BJ (cell line): ENCODE measurements at regions of chr6 and their contacts with region 1.

Region 1: GRCh38 chr6:70221025-70221714 is 81.7 kb downstream of the COL9A1 start:
- DNase-seq: no peak
- H3K4me3 ChIP-seq: no peak overlapping the region
- H3K27me3 ChIP-seq: no peaks in the 10 kb centered on the region
- CTCF ChIP-seq: peak; percentile 63

Region 2: GRCh38 chr6:70099732-70100131 is 121.4 kb before region 1 on chr6:
- CTCF ChIA-PET with region 1: no interaction called
- POLR2A ChIA-PET with region 1: no interaction called
- DNase-seq: no peak
- H3K4me3 ChIP-seq: no peak overlapping the region
- H3K27me3 ChIP-seq: no peaks in the 10 kb centered on the region
- CTCF ChIP-seq: no peak

Region 3: GRCh38 chr6:70198785-70199184 is 22.4 kb before region 1 on chr6:
- CTCF ChIA-PET with region 1: interaction called, 11 read pairs
- POLR2A ChIA-PET with region 1: no interaction called
- DNase-seq: no peak
- H3K4me3 ChIP-seq: no peak overlapping the region
- H3K27me3 ChIP-seq: no peaks in the 10 kb centered on the region
- CTCF ChIP-seq: no peak

Region 4: DNA sequence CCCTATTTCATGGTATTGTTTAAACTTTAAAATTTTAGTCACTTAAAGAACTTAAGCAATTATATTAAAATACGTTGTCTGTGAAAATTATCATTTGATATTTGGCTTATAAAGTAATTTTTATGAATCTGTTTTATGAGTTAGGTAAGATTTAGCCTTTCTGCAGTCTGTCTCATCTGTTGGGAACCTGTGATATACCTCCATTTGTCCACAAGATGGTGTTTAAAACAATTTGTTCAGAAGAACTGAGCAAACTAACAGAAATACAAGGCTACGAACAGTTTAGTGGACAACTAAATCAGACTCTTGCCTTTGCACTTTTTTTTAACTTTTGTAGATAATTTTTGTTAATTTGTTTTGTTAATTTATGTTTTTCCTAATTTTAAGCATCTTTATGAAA is 10.7 kb before region 1 on chr6:
- CTCF ChIA-PET with region 1: interaction called, 18 read pairs
- POLR2A ChIA-PET with region 1: no interaction called
- DNase-seq: no peak
- H3K4me3 ChIP-seq: no peak overlapping the region
- H3K27me3 ChIP-seq: peaks cover 2% of the 10 kb centered on the region; the same call in 1 of the 2 replicates
- CTCF ChIP-seq: peak; percentile 26; the same call in 1 of the 2 replicates

Region 5: DNA sequence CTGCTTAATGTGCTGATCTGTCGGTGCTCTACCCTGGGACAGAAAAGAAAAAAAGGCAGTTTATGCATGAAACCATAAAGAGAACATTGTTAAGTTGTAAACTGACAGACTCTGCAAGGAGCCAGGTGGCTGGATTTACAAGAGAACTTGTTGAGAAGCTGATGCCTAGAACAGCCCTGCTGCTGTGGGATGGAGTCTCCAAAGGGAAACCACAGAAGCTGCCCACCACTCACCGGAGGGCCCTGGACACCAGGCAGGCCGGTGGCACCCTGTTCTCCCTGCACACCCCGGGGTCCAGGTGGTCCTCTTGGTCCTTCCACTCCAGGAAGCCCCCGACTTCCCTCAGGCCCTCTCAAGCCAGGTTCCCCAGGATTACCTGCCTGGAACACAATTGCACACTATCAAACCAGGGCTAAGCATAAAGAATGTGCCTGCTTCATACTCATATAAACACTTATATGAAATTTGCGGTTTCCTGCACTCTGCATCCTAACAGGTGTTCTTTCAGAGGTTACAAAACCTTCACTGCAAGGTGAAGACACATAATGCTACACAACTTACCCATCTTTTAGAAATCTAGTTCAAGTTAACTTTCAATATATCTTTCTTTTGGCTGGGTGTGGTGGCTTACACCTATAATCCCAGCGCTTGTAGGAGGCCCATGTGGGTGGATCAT is 13.5 kb after region 1 on chr6:
- CTCF ChIA-PET with region 1: interaction called, 55 read pairs
- POLR2A ChIA-PET with region 1: no interaction called
- DNase-seq: no peak
- H3K4me3 ChIP-seq: no peak overlapping the region
- H3K27me3 ChIP-seq: no peaks in the 10 kb centered on the region
- CTCF ChIP-seq: no peak

Region 6: GRCh38 chr6:70586114-70586513 is 364.9 kb after region 1 on chr6:
- CTCF ChIA-PET with region 1: no interaction called
- POLR2A ChIA-PET with region 1: no interaction called
- DNase-seq: no peak
- H3K4me3 ChIP-seq: no peak overlapping the region
- H3K27me3 ChIP-seq: no peaks in the 10 kb centered on the region
- CTCF ChIP-seq: no peak